H1 (cell line): ENCODE measurements at regions of chr20 and their contacts with region 1.

Region 1: DNA sequence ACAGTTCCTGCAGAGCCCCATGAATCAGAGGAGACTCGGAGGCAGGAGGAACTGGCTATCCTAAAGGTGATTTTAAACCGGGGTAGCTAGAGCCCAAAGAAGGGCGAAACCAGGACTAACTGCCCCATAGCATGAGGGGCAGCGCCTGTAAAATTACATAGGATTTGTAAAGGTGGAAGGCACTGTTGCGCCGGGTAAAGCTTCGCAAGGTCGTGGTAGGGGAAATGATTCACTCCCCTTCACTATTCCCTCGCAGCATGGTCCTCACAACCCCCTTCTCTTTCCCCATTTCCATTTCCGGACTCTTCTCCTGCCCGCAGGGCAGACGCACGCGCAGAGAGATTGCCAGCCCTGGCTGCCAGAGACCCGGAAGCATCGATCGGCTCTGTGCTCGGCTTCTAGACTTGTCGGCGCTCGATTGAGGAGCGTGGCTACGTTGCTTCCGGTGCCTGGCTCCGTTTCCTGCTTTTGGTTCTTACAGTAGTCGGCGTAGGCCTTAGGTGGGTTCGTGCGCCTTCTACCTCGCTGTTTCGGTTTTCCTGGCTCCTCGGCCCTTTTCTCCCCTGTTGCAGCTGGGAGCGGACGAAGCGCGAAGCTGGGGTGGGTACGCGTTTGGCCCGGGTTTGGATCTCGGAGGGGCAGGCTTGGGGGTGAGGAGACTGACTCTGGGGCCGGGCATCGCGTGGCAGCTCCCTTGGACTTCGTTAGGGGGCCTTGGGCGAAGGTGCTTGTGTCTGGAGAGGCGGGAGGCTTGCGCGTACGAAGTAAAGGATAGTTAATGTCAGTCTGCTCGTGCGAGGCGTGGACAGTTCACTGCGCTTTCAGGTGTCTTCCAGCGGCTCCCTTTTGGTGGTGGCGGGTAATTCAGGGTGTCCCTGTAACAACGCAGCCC is at the start of gene SNRPB2:
- DNase-seq: peak; percentile 84 to 91
- H3K4me3 ChIP-seq: peak within 1 kb of the TSS; percentile 98 to 100 (median 100)
- H3K27ac ChIP-seq: peak within 1 kb of the TSS; percentile 92
- H3K4me1 ChIP-seq: peaks cover 0 to 4% (median 1%) of the 10 kb centered on the region in 4 experiments; a peak in 2 of 7 replicates
- H3K27me3 ChIP-seq: peaks cover 0 to 1% (median 0%) of the 10 kb centered on the region in 4 experiments; a peak in 1 of 7 replicates
- CTCF ChIP-seq: peak in 1 of 3 experiments; percentile 1; a peak in 1 of 4 replicates
- EP300 ChIP-seq: peak; percentile 11 to 82; a peak in 2 of 3 replicates
- POLR2A ChIP-seq: peak; percentile 89 to 95
- RAD21 ChIP-seq: no peak; a peak in 2 of 4 replicates
- total RNA-seq, gene SNRPB2: 99.6 and 102 TPM in 2 replicates

Region 2: GRCh38 chr20:16675001-16675564 is 54.7 kb before region 1 on chr20:
- CTCF ChIA-PET with region 1: no interaction called
- POLR2A ChIA-PET with region 1: no interaction called
- DNase-seq: no peak
- H3K4me3 ChIP-seq: no peak overlapping the region
- H3K27ac ChIP-seq: no peak overlapping the region
- H3K4me1 ChIP-seq: no peaks in the 10 kb centered on the region
- H3K27me3 ChIP-seq: no peaks in the 10 kb centered on the region
- CTCF ChIP-seq: no peak
- EP300 ChIP-seq: no peak
- POLR2A ChIP-seq: no peak
- RAD21 ChIP-seq: no peak

Region 3: GRCh38 chr20:16707674-16708073 is 22.1 kb before region 1 on chr20:
- CTCF ChIA-PET with region 1: no interaction called
- POLR2A ChIA-PET with region 1: no interaction called
- DNase-seq: no peak
- H3K4me3 ChIP-seq: no peak overlapping the region
- H3K27ac ChIP-seq: no peak overlapping the region
- H3K4me1 ChIP-seq: no peaks in the 10 kb centered on the region
- H3K27me3 ChIP-seq: no peaks in the 10 kb centered on the region
- CTCF ChIP-seq: no peak
- EP300 ChIP-seq: no peak
- POLR2A ChIP-seq: no peak
- RAD21 ChIP-seq: no peak

Region 4: DNA sequence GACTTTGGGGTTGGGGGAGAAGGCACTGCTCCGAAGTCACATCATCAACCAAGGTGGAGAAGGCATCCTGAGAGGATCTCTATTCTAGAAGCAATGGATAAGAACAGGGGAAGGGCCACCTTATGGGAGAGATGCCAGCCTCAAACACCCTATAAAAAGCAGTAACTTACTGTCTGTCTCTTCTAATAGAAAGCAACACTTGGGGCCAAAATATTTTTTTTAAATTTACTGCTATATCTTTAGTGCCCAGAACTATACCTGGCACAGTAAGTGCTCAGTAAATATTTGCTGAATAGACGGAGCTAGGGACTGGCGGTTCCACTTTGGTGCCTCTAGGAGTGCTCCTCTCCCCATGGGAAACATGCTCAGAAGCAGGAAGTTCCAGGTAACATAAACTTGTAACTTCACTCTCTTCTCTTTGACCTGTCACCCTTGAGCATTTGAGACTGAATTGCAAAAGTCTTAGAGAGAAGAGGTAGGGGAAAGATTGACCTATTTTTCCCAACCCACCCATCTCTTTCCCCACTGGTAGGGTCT is 17.5 kb after region 1 on chr20:
- CTCF ChIA-PET with region 1: interaction called, 11 read pairs
- POLR2A ChIA-PET with region 1: interaction called, 3 read pairs
- DNase-seq: no peak
- H3K4me3 ChIP-seq: no peak overlapping the region
- H3K27ac ChIP-seq: no peak overlapping the region
- H3K4me1 ChIP-seq: peaks cover 0 to under 1% (median under 1%) of the 10 kb centered on the region in 4 experiments; a peak in 2 of 7 replicates
- H3K27me3 ChIP-seq: no peaks in the 10 kb centered on the region
- CTCF ChIP-seq: peak in 2 of 3 experiments; percentile 23 to 50; a peak in 2 of 4 replicates
- EP300 ChIP-seq: no peak
- POLR2A ChIP-seq: no peak
- RAD21 ChIP-seq: peak in 1 of 2 experiments; percentile 17; a peak in 1 of 4 replicates